CD14-positive monocyte (primary cell): ENCODE measurements at regions of chr3 and their contacts with region 1.

Region 1: GRCh38 chr3:194089357-194090177 is 46.4 kb upstream of the HES1 start:
- DNase-seq: peak; percentile 99 to 100 (median 99)
- H3K4me3 ChIP-seq: peak overlapping the region in 1 of 3 experiments; percentile 56
- H3K4me3 Mint-ChIP-seq: peak overlapping the region; percentile 56 to 78
- H3K27ac ChIP-seq: peak overlapping the region; percentile 79 to 87
- H3K27ac Mint-ChIP-seq: peak overlapping the region; percentile 94 to 98 (median 97)
- H3K4me1 ChIP-seq: peaks cover 30 to 31% of the 10 kb centered on the region in 2 donors
- H3K4me1 Mint-ChIP-seq: peaks cover 42% of the 10 kb centered on the region
- H3K27me3 ChIP-seq: no peaks in the 10 kb centered on the region
- H3K27me3 Mint-ChIP-seq: peaks cover 0 to 3% (median 3%) of the 10 kb centered on the region in 3 donors
- CTCF ChIP-seq: no peak

Region 2: DNA sequence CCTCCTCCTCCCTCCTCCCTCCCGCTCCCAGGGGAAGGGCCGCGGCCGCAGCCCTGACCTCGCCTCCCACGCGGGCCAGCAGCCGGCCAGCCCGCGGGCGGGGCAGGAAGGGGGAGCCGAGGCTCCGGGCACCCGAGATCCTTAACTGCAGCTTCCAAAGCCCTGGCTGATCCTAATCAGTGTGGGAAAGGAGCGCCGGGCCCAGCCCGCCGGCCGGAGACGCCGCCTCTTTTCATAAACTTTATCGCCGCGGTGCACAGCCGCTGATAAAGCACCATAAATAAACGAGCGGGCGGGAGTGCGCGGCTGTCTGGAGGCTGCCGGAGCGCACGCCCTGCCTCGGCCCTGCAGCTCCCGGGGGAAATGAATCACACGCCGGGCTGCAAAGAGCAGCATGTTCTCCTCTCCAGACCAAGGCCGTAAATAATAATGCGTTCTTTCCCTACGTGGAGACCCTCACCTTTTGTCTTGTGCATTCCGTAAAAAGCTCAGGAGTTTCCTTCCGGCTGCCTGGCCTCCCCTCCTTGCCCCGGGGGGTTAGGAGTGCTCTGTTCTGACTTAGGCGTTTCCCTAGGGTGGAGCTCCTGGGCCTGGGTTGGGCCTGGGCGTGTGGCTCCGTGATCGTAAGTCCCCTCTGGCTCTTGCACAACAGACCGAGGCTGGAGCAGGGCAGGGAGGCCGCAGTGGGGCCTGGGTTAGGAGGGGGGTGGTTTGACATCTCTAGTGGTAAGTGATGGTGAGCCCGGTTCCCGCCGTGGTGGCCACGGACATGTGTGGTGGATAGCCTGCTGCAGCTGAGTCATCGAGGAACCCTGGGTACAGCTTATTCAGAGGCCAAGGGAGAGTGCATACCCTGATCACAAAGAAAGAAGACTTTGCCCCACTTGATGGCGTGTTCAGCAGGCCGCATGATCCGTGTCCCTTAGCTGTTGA is 86.2 kb before region 1 on chr3:
- intact Hi-C with region 1: loop called in 1 of 2 experiments (anchors 10 kb)
- DNase-seq: peak; percentile 91 to 94 (median 93)
- H3K4me3 ChIP-seq: peak overlapping the region; percentile 32 to 75 (median 43)
- H3K4me3 Mint-ChIP-seq: peak overlapping the region; percentile 83 to 95
- H3K27ac ChIP-seq: peak overlapping the region; percentile 73 to 89
- H3K27ac Mint-ChIP-seq: peak overlapping the region; percentile 89 to 98 (median 96)
- H3K4me1 ChIP-seq: peaks cover 44 to 53% of the 10 kb centered on the region in 2 donors
- H3K4me1 Mint-ChIP-seq: peaks cover 59% of the 10 kb centered on the region
- H3K27me3 ChIP-seq: no peaks in the 10 kb centered on the region
- H3K27me3 Mint-ChIP-seq: peaks cover 4 to 11% (median 8%) of the 10 kb centered on the region in 3 donors
- CTCF ChIP-seq: no peak

Region 3: DNA sequence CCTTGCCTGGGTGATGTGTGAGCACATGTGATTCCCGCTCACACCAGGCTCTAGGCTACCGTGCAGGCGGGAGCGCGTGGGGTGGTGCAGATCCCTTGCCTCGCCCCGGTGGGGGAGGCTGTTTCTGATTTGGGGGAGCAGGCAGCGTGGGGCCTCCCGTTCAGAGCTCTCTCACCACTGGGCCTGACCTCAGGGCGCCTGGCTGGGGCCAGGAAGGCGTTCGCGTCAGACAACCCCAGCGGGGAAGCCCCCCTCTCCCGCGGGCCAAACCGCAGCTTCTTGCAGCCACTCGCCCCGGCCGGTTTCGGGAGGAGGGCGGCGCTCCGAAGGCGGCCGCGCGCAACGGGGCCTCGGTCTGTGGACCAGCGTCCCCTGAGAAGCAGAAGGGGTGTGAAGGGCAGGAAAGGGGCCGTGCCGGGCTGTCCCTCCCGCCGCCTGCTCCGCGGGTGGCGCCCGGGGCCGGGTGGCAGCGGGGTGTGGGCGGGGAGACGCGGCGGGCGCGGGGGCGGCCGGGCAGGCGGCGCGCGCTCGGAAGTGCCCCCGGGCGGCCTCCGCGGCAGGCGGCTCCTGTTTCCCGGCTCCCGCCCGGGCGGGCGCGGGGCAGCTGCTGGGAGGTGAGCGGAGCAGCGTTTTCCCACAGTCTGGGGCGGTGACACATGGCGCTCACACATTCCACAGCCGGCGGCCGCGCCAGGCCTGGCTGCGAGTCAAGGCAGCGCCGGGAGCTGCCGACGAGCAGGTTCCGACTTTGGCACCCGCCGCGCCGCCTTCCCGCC is 18.7 kb before region 1 on chr3:
- intact Hi-C with region 1: loop called in 1 of 2 experiments (anchors 2 kb)
- DNase-seq: peak; percentile 79 to 89 (median 87)
- H3K4me3 ChIP-seq: peak overlapping the region; percentile 5 to 73 (median 10)
- H3K4me3 Mint-ChIP-seq: peak overlapping the region; percentile 72 to 80
- H3K27ac ChIP-seq: no peak overlapping the region
- H3K27ac Mint-ChIP-seq: peak overlapping the region in 6 of 7 donors; percentile 40 to 90 (median 72)
- H3K4me1 ChIP-seq: peaks cover 26 to 33% of the 10 kb centered on the region in 2 donors
- H3K4me1 Mint-ChIP-seq: peaks cover 38% of the 10 kb centered on the region
- H3K27me3 ChIP-seq: peaks cover 16 to 22% of the 10 kb centered on the region in 2 donors
- H3K27me3 Mint-ChIP-seq: peaks cover 27 to 47% (median 28%) of the 10 kb centered on the region in 3 donors
- CTCF ChIP-seq: no peak

Region 4: GRCh38 chr3:194129581-194130133 is 40.1 kb after region 1 on chr3:
- intact Hi-C with region 1: loop called in 1 of 2 experiments (anchors 5 kb)
- DNase-seq: no peak
- H3K4me3 ChIP-seq: no peak overlapping the region
- H3K4me3 Mint-ChIP-seq: no peak overlapping the region
- H3K27ac ChIP-seq: no peak overlapping the region
- H3K27ac Mint-ChIP-seq: no peak overlapping the region
- H3K4me1 ChIP-seq: peaks cover 7 to 12% of the 10 kb centered on the region in 2 donors
- H3K4me1 Mint-ChIP-seq: peaks cover 5% of the 10 kb centered on the region
- H3K27me3 ChIP-seq: peaks cover 37 to 52% of the 10 kb centered on the region in 2 donors
- H3K27me3 Mint-ChIP-seq: peaks cover 54 to 76% (median 54%) of the 10 kb centered on the region in 3 donors
- CTCF ChIP-seq: no peak

Region 5: DNA sequence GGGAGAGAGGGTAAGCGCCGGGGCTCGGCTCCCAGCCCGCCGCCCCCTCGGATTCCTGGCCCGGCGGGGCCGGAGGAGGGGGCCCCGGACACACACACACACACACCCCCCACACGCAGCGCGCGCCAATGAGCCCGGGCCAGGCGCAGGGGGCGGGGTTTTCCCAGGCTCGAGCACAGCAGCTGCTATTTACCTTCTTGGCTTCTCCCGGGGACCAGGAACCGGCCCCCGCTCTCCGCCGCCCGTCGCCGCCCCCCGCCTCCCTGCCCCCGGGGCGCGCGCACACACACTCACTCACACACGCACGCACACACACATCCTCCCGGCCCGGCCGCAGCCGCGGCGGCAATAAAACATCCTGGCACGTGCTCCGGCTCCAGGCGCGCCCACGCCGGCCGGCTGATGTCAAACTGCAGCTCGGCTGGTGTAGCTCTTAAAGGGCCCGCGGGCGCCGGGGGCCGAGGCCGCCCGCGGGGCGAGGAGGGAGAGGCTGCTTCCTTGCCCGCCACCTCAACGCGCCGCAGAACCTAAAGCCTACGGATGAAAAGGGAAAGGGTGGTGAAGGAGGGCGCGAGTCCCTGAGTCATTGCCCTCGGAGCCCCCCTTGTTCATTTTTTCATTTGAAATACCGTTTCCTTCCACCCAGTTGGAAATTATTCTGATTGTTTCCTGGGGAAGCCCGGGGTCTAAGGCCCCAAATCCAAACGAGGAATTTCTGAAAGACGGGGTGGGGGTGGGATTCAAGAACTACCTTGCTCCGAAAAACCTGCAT is 45.4 kb after region 1 on chr3:
- intact Hi-C with region 1: loop called in 1 of 2 experiments (anchors 5 kb)
- DNase-seq: peak; percentile 83 to 91 (median 87)
- H3K4me3 ChIP-seq: peak overlapping the region; percentile 9 to 70 (median 41)
- H3K4me3 Mint-ChIP-seq: peak overlapping the region; percentile 82 to 90
- H3K27ac ChIP-seq: peak overlapping the region; percentile 11 to 48
- H3K27ac Mint-ChIP-seq: peak overlapping the region; percentile 57 to 91 (median 79)
- H3K4me1 ChIP-seq: peaks cover 39 to 47% of the 10 kb centered on the region in 2 donors
- H3K4me1 Mint-ChIP-seq: peaks cover 35% of the 10 kb centered on the region
- H3K27me3 ChIP-seq: peaks cover 78 to 90% of the 10 kb centered on the region in 2 donors
- H3K27me3 Mint-ChIP-seq: peaks cover 82 to 93% (median 86%) of the 10 kb centered on the region in 3 donors
- CTCF ChIP-seq: no peak

Region 6: GRCh38 chr3:194344012-194344411 is 254.4 kb after region 1 on chr3:
- intact Hi-C with region 1: no loop called
- DNase-seq: peak; percentile 35 to 53 (median 44)
- H3K4me3 ChIP-seq: no peak overlapping the region
- H3K4me3 Mint-ChIP-seq: no peak overlapping the region
- H3K27ac ChIP-seq: no peak overlapping the region
- H3K27ac Mint-ChIP-seq: no peak overlapping the region
- H3K4me1 ChIP-seq: no peaks in the 10 kb centered on the region
- H3K4me1 Mint-ChIP-seq: peaks cover 5% of the 10 kb centered on the region
- H3K27me3 ChIP-seq: no peaks in the 10 kb centered on the region
- H3K27me3 Mint-ChIP-seq: peaks cover 9 to 16% (median 9%) of the 10 kb centered on the region in 3 donors
- CTCF ChIP-seq: peak; percentile 94